ENCODE measurements at regions of chr19 and their contacts with region 1.

Region 1: DNA sequence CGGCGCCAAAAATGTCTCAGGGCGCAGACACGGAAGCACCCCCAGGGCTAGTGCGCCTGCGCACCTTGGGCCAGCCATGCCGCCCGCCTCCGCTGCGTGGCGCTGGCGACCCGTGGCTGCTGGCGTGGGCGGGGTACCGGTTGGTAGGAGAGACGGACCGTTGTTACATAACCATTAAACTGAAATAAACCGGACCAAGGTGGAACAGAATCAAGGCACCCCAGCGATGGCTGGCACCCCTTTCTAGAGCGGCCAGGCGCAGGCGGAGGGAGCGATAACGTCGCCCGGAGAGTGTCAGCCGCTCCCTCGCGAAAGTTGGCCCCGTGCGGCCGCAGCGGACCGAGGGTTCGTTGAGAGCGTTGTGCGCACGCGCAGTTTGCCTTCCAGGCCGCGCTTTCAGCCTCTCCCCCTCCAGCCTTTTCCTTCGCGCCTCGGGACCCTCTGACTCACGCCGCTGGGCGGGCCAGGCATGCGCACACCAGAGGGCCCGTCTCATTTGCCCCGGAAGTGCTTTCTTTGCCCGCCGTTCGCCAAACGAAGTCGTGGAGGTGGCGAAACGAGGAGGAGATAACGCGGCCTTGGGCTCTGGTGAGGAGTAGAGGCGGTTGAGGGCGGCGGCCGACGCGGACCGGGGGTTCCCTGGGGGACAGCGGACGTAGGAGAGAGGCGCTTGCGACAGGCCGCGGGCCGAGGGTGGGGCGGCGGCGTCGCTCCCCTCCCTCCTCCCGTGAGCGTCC is at the starts of genes PLEKHJ1 and SF3A2:
- DNase-seq: peak; percentile 97 to 98 (median 98)
- H3K4me3 ChIP-seq: peak within 1 kb of the TSS; percentile 54 to 88 (median 73)
- H3K4me3 Mint-ChIP-seq: peak within 1 kb of the TSS; percentile 87 to 94
- H3K27ac ChIP-seq: peak within 1 kb of the TSS; percentile 97 to 99
- H3K27ac Mint-ChIP-seq: peak within 1 kb of the TSS; percentile 97 to 100 (median 99)
- H3K4me1 ChIP-seq: peaks cover 51 to 66% of the 10 kb centered on the region in 2 donors
- H3K4me1 Mint-ChIP-seq: peaks cover 62% of the 10 kb centered on the region
- H3K27me3 ChIP-seq: no peaks in the 10 kb centered on the region
- H3K27me3 Mint-ChIP-seq: peaks cover 0 to 2% (median 1%) of the 10 kb centered on the region in 3 donors
- CTCF ChIP-seq: peak; percentile 99
- polyA plus RNA-seq, gene PLEKHJ1: 62.1 to 90.0 (median 69.0) TPM
- polyA plus RNA-seq, gene SF3A2: 8.0 to 70.8 (median 11.6) TPM

Region 2: GRCh38 chr19:2151339-2152229 is 84.9 kb before region 1 on chr19 and contains the start of gene AP3D1:
- intact Hi-C with region 1: loop called (anchors 5 kb)
- DNase-seq: peak; percentile 99 to 100 (median 100)
- H3K4me3 ChIP-seq: peak within 1 kb of the TSS; percentile 84 to 99 (median 90)
- H3K4me3 Mint-ChIP-seq: peak within 1 kb of the TSS; percentile 86 to 90
- H3K27ac ChIP-seq: peak within 1 kb of the TSS; percentile 87 to 90
- H3K27ac Mint-ChIP-seq: peak within 1 kb of the TSS; percentile 91 to 97 (median 94)
- H3K4me1 ChIP-seq: peaks cover 40 to 41% of the 10 kb centered on the region in 2 donors
- H3K4me1 Mint-ChIP-seq: peaks cover 40% of the 10 kb centered on the region
- H3K27me3 ChIP-seq: no peaks in the 10 kb centered on the region
- H3K27me3 Mint-ChIP-seq: peaks cover 0 to 3% (median 0%) of the 10 kb centered on the region in 3 donors
- CTCF ChIP-seq: no peak
- polyA plus RNA-seq, gene AP3D1: 9.6 to 105 (median 12.4) TPM

Region 3: DNA sequence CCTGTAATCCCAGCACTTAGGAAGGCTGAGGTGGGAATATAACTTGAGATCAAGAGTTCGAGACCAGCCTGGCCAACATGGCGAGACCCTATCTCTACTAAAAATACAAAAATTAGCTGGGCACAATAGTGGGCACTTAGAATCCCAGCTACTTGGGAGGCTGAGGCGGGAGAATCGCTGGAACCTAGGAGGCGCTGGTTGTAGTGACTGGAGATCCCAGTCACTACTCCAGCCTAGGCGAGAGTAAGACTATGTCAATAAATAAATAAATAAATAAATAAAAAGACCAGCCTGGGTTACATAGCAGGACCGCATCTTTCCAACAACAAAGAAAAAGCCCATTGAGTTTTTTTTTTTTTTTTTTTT is 74.8 kb before region 1 on chr19:
- intact Hi-C with region 1: loop called in 1 of 2 experiments (anchors 2 kb)
- DNase-seq: no peak
- H3K4me3 ChIP-seq: no peak overlapping the region
- H3K4me3 Mint-ChIP-seq: no peak overlapping the region
- H3K27ac ChIP-seq: no peak overlapping the region
- H3K27ac Mint-ChIP-seq: peak overlapping the region in 1 of 7 donors; percentile 54
- H3K4me1 ChIP-seq: peaks cover 18 to 29% of the 10 kb centered on the region in 2 donors
- H3K4me1 Mint-ChIP-seq: peaks cover 22% of the 10 kb centered on the region
- H3K27me3 ChIP-seq: no peaks in the 10 kb centered on the region
- H3K27me3 Mint-ChIP-seq: peaks cover 0 to 3% (median 1%) of the 10 kb centered on the region in 3 donors
- CTCF ChIP-seq: no peak

Region 4: DNA sequence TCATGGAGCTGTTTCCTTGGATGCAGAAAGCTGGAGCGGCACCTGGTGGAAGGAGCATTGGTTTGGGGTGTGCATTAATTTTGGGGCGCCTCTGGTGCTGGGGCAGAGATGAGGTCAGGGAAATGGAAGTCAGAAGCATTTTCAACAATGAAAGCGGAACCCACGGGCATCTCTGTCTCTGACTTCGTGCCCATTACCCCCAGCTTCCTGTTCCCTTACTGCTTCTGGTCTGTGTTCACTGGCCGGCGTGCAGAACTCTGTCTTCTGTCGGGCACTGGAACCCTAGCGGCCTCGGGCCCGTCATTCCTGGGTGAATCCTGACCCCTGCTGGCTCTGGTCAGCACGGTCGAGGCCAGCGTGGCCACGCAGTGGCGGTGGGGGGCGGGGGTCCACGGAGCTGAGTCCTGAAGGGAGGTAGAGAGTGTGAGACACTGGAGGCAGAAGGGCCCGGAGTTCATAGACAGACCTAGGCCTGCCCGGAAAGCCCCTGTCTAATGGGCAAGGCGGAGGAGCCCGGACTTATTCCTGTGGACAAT is 79.4 kb after region 1 on chr19:
- intact Hi-C with region 1: loop called in 1 of 2 experiments (anchors 5 kb)
- DNase-seq: peak; percentile 90 to 94 (median 93)
- H3K4me3 ChIP-seq: peak overlapping the region in 1 of 3 experiments; percentile 30
- H3K4me3 Mint-ChIP-seq: peak overlapping the region; percentile 55 to 69
- H3K27ac ChIP-seq: peak overlapping the region; percentile 75 to 78
- H3K27ac Mint-ChIP-seq: peak overlapping the region; percentile 85 to 96 (median 93)
- H3K4me1 ChIP-seq: peaks cover 15 to 21% of the 10 kb centered on the region in 2 donors
- H3K4me1 Mint-ChIP-seq: peaks cover 16% of the 10 kb centered on the region
- H3K27me3 ChIP-seq: peaks cover 0 to 14% of the 10 kb centered on the region in 2 donors
- H3K27me3 Mint-ChIP-seq: peaks cover 13 to 36% (median 29%) of the 10 kb centered on the region in 3 donors
- CTCF ChIP-seq: peak; percentile 81

Region 5: DNA sequence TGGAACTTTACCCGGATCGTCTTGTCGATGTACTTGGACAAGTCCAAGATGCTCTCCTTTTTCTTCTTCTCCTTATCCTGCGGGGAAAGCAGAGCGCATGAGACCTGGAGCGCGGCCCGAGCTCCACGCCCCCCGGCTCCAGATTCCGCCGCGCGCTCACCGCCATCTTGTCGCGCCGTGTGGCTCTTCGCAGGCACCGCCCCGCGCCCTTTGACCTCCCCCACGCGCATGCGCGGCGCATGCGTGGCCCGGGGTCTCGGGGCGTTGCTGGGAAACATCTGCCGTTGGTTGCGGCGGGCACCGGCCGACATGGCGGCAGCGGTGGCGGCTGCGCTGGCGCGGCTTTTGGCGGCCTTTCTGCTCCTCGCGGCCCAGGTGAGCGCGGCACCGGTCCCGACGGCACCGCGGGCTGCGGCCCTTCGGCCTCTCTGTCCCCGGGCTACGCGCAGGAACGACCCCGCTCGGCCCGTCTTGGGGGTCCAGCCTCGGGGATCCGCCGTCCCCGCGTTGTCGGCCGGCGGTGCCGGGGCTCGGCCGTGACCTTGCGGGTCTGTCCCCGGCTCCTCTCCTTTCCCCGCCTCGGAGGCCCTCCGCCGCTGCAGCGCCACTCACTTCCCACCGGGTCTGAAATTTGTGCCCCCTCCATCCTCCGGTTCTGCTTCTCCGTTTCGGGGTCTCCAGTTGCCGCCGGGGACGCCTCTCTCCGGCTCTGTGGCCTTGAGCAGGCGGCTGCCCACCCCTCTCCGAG is 92.1 kb after region 1 on chr19 and contains the starts of genes LSM7 and SPPL2B:
- intact Hi-C with region 1: loop called in 1 of 2 experiments (anchors 5 kb)
- DNase-seq: peak; percentile 82 to 90 (median 89)
- H3K4me3 ChIP-seq: peak within 1 kb of the TSS; percentile 82 to 97 (median 92)
- H3K4me3 Mint-ChIP-seq: peak within 1 kb of the TSS; percentile 100
- H3K27ac ChIP-seq: peak within 1 kb of the TSS; percentile 75 to 80
- H3K27ac Mint-ChIP-seq: peak within 1 kb of the TSS; percentile 98 to 99 (median 99)
- H3K4me1 ChIP-seq: peaks cover 34 to 50% of the 10 kb centered on the region in 2 donors
- H3K4me1 Mint-ChIP-seq: peaks cover 65% of the 10 kb centered on the region
- H3K27me3 ChIP-seq: no peaks in the 10 kb centered on the region
- H3K27me3 Mint-ChIP-seq: peaks cover 0 to 10% (median 3%) of the 10 kb centered on the region in 3 donors
- CTCF ChIP-seq: no peak
- polyA plus RNA-seq, gene LSM7: 98.6 to 312 (median 132) TPM
- polyA plus RNA-seq, gene SPPL2B: 5.7 to 64.9 (median 8.7) TPM